ENCODE measurements at regions of chr6 and their contacts with region 1.

Region 1: DNA sequence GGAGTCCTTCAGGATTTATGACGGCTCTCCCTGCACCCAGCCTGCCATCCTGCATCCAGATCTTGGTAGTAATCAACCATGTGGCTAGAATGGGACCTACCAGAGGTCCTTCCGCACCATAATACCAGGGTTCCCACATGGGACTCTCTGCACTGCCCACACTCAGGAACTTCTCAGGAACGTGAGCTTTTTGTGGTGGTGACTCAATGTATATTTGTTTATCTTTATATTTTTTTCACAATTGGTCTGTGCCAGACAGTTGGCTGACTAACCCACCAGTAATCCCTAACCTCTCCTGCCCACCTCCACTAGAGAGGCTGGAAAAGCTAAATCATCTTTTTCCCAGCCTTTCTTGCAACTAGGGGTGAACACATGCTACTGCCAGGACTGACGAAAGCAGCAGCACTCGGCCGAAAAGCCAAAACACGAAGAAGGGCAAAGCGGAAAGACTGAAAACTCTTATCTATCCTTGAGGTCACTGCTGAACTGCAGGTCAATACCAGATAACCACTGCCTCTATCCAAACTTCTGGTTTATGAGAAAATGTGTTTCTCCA is 113.0 kb downstream of the TRERF1 start:
- DNase-seq: no peak
- H3K4me3 Mint-ChIP-seq: peak overlapping the region; percentile 23
- H3K27ac Mint-ChIP-seq: peak overlapping the region; percentile 88
- H3K4me1 Mint-ChIP-seq: peaks cover 63% of the 10 kb centered on the region
- H3K27me3 Mint-ChIP-seq: no peaks in the 10 kb centered on the region

Region 2: GRCh38 chr6:42322676-42323075 is 16.1 kb before region 1 on chr6:
- intact Hi-C with region 1: loop called (anchors 1 kb)
- DNase-seq: no peak
- H3K4me3 Mint-ChIP-seq: no peak overlapping the region
- H3K27ac Mint-ChIP-seq: no peak overlapping the region
- H3K4me1 Mint-ChIP-seq: peaks cover 25% of the 10 kb centered on the region
- H3K27me3 Mint-ChIP-seq: no peaks in the 10 kb centered on the region

Region 3: DNA sequence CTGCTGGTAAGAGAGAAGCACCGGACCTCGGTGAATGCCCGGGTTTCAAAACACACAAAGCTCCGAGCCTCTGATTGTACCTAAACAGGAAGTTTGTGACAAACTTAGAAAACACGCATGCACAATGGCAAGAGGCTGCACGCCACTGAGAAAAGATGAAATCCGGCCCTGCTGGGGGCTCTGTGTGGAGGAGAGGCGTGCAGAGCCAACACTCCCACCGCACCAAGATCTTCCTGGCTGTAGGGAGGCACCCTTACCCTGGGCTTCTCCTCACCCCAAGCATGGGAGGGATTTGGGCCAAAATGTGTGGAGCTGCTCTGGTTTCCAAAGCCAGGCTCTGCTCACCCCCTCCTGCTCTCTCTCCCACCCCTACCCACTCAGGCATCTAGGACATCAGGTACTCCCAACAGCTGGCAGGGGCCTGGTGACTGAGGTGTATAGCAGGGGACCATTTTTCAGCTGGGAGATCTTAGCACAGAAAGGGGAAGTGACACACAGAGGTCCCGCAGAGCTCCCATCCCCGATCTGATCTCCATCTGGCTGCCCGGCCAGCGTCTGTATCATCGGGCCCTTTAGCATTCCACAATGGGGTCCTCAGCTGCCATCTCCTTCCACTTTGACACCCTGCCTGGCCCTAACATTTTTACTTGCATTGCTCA is 28.7 kb after region 1 on chr6:
- intact Hi-C with region 1: loop called (anchors 1 kb)
- DNase-seq: no peak
- H3K4me3 Mint-ChIP-seq: peak overlapping the region; percentile 47
- H3K27ac Mint-ChIP-seq: peak overlapping the region; percentile 84
- H3K4me1 Mint-ChIP-seq: peaks cover 61% of the 10 kb centered on the region
- H3K27me3 Mint-ChIP-seq: no peaks in the 10 kb centered on the region

Region 4: GRCh38 chr6:42390228-42390934 is 51.6 kb after region 1 on chr6:
- intact Hi-C with region 1: loop called (anchors 1 kb)
- DNase-seq: peak; percentile 50
- H3K4me3 Mint-ChIP-seq: peak overlapping the region; percentile 76
- H3K27ac Mint-ChIP-seq: peak overlapping the region; percentile 99
- H3K4me1 Mint-ChIP-seq: peaks cover 90% of the 10 kb centered on the region
- H3K27me3 Mint-ChIP-seq: no peaks in the 10 kb centered on the region

Region 5: DNA sequence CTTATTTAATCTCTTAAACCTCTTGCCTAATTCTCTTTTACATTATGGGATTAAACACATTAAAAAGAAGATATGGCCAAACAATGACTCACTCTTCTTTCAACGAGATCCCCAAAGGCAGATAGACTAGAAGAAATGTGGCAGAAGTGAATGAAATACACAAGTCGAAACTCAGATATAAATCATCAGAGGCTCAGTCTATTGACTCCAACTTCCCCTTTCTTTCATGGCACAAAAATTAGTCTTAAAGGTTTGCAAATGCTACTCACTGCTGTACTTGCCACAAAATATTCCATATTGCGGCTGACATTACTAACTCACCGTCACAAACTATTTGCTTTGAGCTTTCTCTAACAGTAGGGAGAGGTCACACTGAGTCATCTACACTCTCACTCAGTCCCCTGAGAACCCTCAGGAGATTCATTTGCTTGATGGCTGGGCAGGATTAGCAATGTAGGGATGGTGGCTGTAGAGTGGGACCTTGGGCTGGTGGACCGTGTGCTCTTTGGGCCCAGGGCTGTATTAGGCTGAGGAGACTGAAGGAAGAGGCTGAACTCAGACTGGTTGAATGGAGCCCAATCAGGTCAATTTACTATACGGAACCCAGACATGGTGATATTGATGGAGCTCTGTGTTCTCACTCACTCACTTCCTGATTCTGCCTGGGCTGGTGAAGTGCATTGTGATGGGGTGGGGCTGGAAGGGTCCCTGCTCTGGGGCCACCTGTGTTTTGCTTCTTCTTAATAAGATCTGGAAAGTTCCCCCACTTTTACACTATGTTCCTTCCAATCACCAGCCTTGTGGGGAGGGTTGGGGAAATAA is 182.3 kb after region 1 on chr6:
- intact Hi-C with region 1: loop called (anchors 1 kb)
- DNase-seq: no peak
- H3K4me3 Mint-ChIP-seq: no peak overlapping the region
- H3K27ac Mint-ChIP-seq: peak overlapping the region; percentile 90
- H3K4me1 Mint-ChIP-seq: peaks cover 18% of the 10 kb centered on the region
- H3K27me3 Mint-ChIP-seq: no peaks in the 10 kb centered on the region

Region 6: GRCh38 chr6:42879372-42880239 is 540.9 kb after region 1 on chr6 and contains the start of gene RPL7L1:
- intact Hi-C with region 1: no loop called
- DNase-seq: peak; percentile 84
- H3K4me3 Mint-ChIP-seq: peak within 1 kb of the TSS; percentile 94
- H3K27ac Mint-ChIP-seq: peak within 1 kb of the TSS; percentile 98
- H3K4me1 Mint-ChIP-seq: peaks cover 6% of the 10 kb centered on the region
- H3K27me3 Mint-ChIP-seq: no peaks in the 10 kb centered on the region
- total RNA-seq, gene RPL7L1: 149 and 151 TPM in 2 replicates

Measured in activated T-helper 2 cell treated with anti-CD3 and anti-CD28 coated beads, Interferon-gamma antibody, Interleukin-2, Interleukin-4, amounts not matched to agents 10 μg/mL and 5 μg/mL and 100 μg/mL, durations not matched to agents 14 hours and 24 hours and 36 hours (primary cell).